ENCODE measurements at regions of chr3 and their contacts with region 1.

Region 1: DNA sequence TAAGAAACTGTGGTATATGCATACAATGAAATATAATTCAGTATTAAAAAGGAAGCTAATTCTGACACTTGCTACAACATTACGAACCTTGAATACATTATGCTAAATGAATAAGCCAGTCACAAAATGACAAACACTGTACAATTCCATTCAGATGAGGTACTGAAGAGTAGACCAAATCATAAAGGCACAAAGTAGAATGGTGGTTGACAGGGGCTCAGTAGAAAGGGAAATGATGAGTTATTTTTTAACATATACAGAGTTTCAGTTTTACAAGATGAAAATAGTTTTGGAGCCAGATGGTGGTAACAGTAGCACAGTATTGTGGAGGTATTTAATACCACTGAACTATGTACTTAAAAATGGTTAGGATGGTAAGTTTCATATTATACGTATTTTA is 254.6 kb upstream of the RBMS3 start:
- DNase-seq: no peak
- ATAC-seq: no peak
- H3K4me3 ChIP-seq: no peak overlapping the region
- H3K4me3 Mint-ChIP-seq: no peak overlapping the region
- H3K27ac ChIP-seq: no peak overlapping the region
- H3K27ac Mint-ChIP-seq: no peak overlapping the region
- H3K4me1 ChIP-seq: no peaks in the 10 kb centered on the region
- H3K4me1 Mint-ChIP-seq: no peaks in the 10 kb centered on the region
- H3K27me3 ChIP-seq: no peaks in the 10 kb centered on the region
- H3K27me3 Mint-ChIP-seq: no peaks in the 10 kb centered on the region

Region 2: GRCh38 chr3:29004885-29005599 is 21.2 kb before region 1 on chr3:
- CTCF ChIA-PET with region 1: interaction called in 1 of 2 experiments, 11 read pairs
- POLR2A ChIA-PET with region 1: no interaction called
- DNase-seq: no peak
- ATAC-seq: no peak
- H3K4me3 ChIP-seq: no peak overlapping the region
- H3K4me3 Mint-ChIP-seq: no peak overlapping the region
- H3K27ac ChIP-seq: no peak overlapping the region
- H3K27ac Mint-ChIP-seq: no peak overlapping the region
- H3K4me1 ChIP-seq: no peaks in the 10 kb centered on the region
- H3K4me1 Mint-ChIP-seq: no peaks in the 10 kb centered on the region
- H3K27me3 ChIP-seq: no peaks in the 10 kb centered on the region
- H3K27me3 Mint-ChIP-seq: no peaks in the 10 kb centered on the region

Measured in T-cell (primary cell).